Breast epithelium (tissue), 4 donors: ENCODE measurements at regions of chr2 and their contacts with region 1.

Region 1: GRCh38 chr2:229022071-229022470 is 249.0 kb downstream of the PID1 start:
- DNase-seq: no peak
- H3K4me3 ChIP-seq: no peak overlapping the region
- H3K27ac ChIP-seq: no peak overlapping the region
- H3K4me1 ChIP-seq: no peaks in the 10 kb centered on the region
- H3K27me3 ChIP-seq: no peaks in the 10 kb centered on the region
- CTCF ChIP-seq: no peak
- POLR2A ChIP-seq: no peak

Region 2: DNA sequence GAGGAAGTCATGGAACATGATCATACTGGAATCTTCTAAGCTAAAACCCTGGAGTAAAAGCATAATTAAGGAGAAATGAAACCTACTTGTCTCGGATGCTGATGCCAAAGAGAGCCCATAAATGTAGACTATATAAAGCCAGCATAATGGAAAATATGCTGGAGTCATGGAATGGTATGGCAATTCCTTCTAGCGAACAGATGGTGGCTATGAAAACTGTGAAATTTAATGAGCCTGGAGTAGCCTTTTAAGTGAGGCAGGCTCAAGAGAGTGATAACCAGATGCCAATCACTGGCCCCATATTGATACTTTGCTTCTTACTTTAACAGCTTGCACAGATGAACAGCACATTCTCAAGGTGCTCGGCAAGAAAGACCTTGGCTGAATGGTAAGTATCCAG is 42.7 kb after region 1 on chr2:
- intact Hi-C with region 1: loop called (anchors 2 kb)
- DNase-seq: no peak
- H3K4me3 ChIP-seq: no peak overlapping the region
- H3K27ac ChIP-seq: no peak overlapping the region
- H3K4me1 ChIP-seq: no peaks in the 10 kb centered on the region
- H3K27me3 ChIP-seq: no peaks in the 10 kb centered on the region
- CTCF ChIP-seq: no peak
- POLR2A ChIP-seq: no peak